Activated CD4-positive, alpha-beta memory T cell treated with anti-CD3 and anti-CD28 coated beads for 36 hours (primary cell): ENCODE measurements at regions of chr11 and their contacts with region 1.

Region 1: GRCh38 chr11:118359295-118359958 is at the start of gene UBE4A:
- DNase-seq: peak; percentile 99
- H3K4me3 Mint-ChIP-seq: peak within 1 kb of the TSS; percentile 96
- H3K27ac Mint-ChIP-seq: peak within 1 kb of the TSS; percentile 93
- H3K4me1 Mint-ChIP-seq: peaks cover 45% of the 10 kb centered on the region
- H3K27me3 Mint-ChIP-seq: peaks cover 2% of the 10 kb centered on the region
- total RNA-seq, gene UBE4A: 39.1 to 40.4 TPM

Region 2: DNA sequence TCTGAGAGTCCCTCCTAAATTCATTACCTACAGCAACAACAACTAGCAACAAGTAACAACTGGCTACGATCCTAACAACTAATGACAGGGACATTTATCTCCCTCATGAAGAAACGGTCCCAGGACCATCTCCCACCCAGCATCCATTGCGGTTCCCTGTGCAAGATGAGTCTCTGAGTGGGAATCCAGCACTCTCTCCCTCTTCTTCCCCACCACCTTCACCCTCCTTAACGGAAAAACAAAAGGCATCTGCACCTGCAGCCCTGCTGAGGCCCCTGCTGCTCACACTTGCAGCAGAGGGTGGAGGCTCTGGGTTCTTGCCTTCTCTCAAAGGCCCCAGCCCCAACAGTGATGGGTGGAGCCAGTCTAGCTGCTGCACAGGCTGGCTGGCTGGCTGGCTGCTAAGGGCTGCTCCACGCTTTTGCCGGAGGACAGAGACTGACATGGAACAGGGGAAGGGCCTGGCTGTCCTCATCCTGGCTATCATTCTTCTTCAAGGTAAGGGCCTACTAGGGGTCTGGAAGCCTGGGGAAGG is 15.4 kb before region 1 on chr11 and contains the start of gene CD3G:
- CTCF ChIA-PET with region 1: interaction called, 16 read pairs
- POLR2A ChIA-PET with region 1: interaction called, 6 read pairs
- intact Hi-C with region 1: loop called (anchors 2 kb)
- DNase-seq: peak; percentile 81
- H3K4me3 Mint-ChIP-seq: peak within 1 kb of the TSS; percentile 82
- H3K27ac Mint-ChIP-seq: peak within 1 kb of the TSS; percentile 98
- H3K4me1 Mint-ChIP-seq: peaks cover 52% of the 10 kb centered on the region
- H3K27me3 Mint-ChIP-seq: no peaks in the 10 kb centered on the region
- total RNA-seq, gene CD3G: 137 to 138 TPM